Heart right ventricle (tissue), 16 donors: ENCODE measurements at regions of chr16 and their contacts with region 1.

Region 1: GRCh38 chr16:17467923-17468540 is 2.7 kb downstream of the XYLT1 start:
- DNase-seq: peak; percentile 44 to 71
- ATAC-seq: peak; percentile 58 to 90 (median 78)
- H3K4me3 ChIP-seq: no peak overlapping the region
- H3K27ac ChIP-seq: no peak overlapping the region
- H3K4me1 ChIP-seq: peaks cover 0 to 41% (median 16%) of the 10 kb centered on the region in 9 donors
- H3K27me3 ChIP-seq: peaks cover 0 to 52% (median 38%) of the 10 kb centered on the region in 7 donors
- CTCF ChIP-seq: peak; percentile 22 to 79 (median 65)

Region 2: DNA sequence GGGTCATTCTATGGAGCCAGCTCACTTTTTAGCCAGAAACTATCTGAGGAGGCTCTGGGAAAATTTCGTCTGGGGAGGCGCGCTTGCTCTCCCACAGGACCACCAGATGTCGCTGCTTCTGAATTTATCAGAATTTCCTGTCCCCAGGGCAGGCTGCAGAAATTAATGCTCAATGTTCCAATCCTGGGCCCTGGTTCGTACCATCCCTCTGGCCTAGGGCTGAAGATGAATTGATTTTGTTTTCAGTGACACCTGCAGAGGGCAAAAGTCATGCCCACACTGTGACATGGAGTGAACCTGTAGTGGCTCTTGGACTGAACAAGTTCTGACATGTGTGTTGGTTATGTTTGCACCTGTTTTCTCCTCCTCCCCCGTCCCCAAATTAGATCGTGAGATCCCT is 606.5 kb before region 1 on chr16:
- intact Hi-C with region 1: loop called in 8 of 10 experiments (anchors 5 to 10 kb)
- DNase-seq: peak; percentile 22 to 25
- ATAC-seq: peak in 3 of 8 donors; percentile 16 to 41 (median 32)
- H3K4me3 ChIP-seq: no peak overlapping the region
- H3K27ac ChIP-seq: no peak overlapping the region
- H3K4me1 ChIP-seq: peaks cover 0 to 30% (median 5%) of the 10 kb centered on the region in 9 donors
- H3K27me3 ChIP-seq: peaks cover 0 to 14% (median 0%) of the 10 kb centered on the region in 7 donors
- CTCF ChIP-seq: peak; percentile 29 to 82 (median 73)

Region 3: GRCh38 chr16:17205279-17206211 is 262.5 kb before region 1 on chr16:
- intact Hi-C with region 1: loop called in 1 of 10 experiments (anchors 10 kb)
- DNase-seq: no peak
- ATAC-seq: no peak
- H3K4me3 ChIP-seq: no peak overlapping the region
- H3K27ac ChIP-seq: no peak overlapping the region
- H3K4me1 ChIP-seq: peaks cover 0 to 21% (median 0%) of the 10 kb centered on the region in 9 donors
- H3K27me3 ChIP-seq: peaks cover 0 to 15% (median 3%) of the 10 kb centered on the region in 7 donors
- CTCF ChIP-seq: no peak

Region 4: DNA sequence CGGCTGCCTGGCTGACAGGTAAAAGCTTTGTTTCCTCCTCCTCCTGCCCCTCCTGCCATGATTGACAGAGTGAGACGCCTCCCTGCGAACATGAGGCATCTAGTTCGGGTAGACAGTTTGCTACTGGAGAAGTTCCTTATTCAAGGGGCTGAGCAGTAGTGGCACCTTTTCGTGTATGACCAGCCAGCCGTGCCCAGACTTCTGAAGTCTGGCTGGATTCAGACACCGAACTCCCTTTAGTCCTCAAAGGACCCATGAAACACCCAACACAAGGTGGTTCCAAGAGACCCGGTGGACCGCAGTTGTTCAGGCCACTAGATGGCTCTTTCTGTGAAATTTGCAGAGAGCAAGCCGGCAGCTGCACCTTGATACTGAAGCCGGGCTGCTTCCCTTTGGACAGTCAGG is 190.1 kb before region 1 on chr16:
- intact Hi-C with region 1: loop called (anchors 2 to 10 kb)
- DNase-seq: peak in 1 of 2 donors; percentile 21
- ATAC-seq: peak in 5 of 8 donors; percentile 38 to 77 (median 58)
- H3K4me3 ChIP-seq: no peak overlapping the region
- H3K27ac ChIP-seq: no peak overlapping the region
- H3K4me1 ChIP-seq: peaks cover 0 to 15% (median 0%) of the 10 kb centered on the region in 9 donors
- H3K27me3 ChIP-seq: peaks cover 0 to 11% (median 0%) of the 10 kb centered on the region in 7 donors
- CTCF ChIP-seq: peak in 7 of 9 donors; percentile 32 to 60 (median 55)

Region 5: GRCh38 chr16:17343028-17343427 is 125.0 kb before region 1 on chr16:
- intact Hi-C with region 1: loop called in 1 of 10 experiments (anchors 10 kb)
- DNase-seq: no peak
- ATAC-seq: no peak
- H3K4me3 ChIP-seq: no peak overlapping the region
- H3K27ac ChIP-seq: no peak overlapping the region
- H3K4me1 ChIP-seq: peaks cover 3 to 79% (median 28%) of the 10 kb centered on the region in 9 donors
- H3K27me3 ChIP-seq: no peaks in the 10 kb centered on the region
- CTCF ChIP-seq: no peak

Region 6: DNA sequence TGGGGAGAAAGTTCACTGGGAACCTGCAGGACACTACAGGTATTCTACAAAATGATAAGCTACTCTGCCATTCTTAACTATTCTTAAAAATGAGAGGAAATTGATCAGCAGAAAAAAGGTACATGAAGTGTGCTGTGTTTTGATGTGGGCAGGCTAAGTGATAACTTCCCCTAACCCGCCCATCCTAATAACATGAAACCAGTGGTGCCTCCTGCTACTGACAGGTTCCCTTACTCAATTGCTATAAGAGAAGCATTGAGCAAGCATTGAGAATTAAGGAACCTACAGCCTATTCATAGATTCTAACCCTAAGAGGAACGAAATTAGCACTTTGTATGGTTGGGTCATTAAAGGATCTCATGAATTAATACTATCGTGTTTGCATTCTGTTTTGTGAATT is 16.2 kb before region 1 on chr16:
- intact Hi-C with region 1: no loop called
- DNase-seq: no peak
- ATAC-seq: peak in 1 of 8 donors; percentile 27
- H3K4me3 ChIP-seq: no peak overlapping the region
- H3K27ac ChIP-seq: peak overlapping the region in 1 of 10 donors; percentile 36
- H3K4me1 ChIP-seq: peaks cover 0 to 52% (median 6%) of the 10 kb centered on the region in 9 donors
- H3K27me3 ChIP-seq: no peaks in the 10 kb centered on the region
- CTCF ChIP-seq: no peak